ENCODE measurements at regions of chr10 and their contacts with region 1.

Region 1: GRCh38 chr10:79195091-79195923 is 126.5 kb downstream of the ZMIZ1 start:
- DNase-seq: peak; percentile 85
- H3K4me3 ChIP-seq: no peak overlapping the region
- H3K27ac ChIP-seq: no peak overlapping the region
- H3K4me1 ChIP-seq: peaks cover 4% of the 10 kb centered on the region
- H3K27me3 ChIP-seq: no peaks in the 10 kb centered on the region
- CTCF ChIP-seq: peak; percentile 95

Region 2: GRCh38 chr10:78211561-78212051 is 983.7 kb before region 1 on chr10:
- CTCF ChIA-PET with region 1: no interaction called
- POLR2A ChIA-PET with region 1: no interaction called
- intact Hi-C with region 1: loop called (anchors 5 kb)
- DNase-seq: peak; percentile 39
- H3K4me3 ChIP-seq: no peak overlapping the region
- H3K27ac ChIP-seq: no peak overlapping the region
- H3K4me1 ChIP-seq: peaks cover 26% of the 10 kb centered on the region
- H3K27me3 ChIP-seq: no peaks in the 10 kb centered on the region
- CTCF ChIP-seq: peak; percentile 73

Region 3: DNA sequence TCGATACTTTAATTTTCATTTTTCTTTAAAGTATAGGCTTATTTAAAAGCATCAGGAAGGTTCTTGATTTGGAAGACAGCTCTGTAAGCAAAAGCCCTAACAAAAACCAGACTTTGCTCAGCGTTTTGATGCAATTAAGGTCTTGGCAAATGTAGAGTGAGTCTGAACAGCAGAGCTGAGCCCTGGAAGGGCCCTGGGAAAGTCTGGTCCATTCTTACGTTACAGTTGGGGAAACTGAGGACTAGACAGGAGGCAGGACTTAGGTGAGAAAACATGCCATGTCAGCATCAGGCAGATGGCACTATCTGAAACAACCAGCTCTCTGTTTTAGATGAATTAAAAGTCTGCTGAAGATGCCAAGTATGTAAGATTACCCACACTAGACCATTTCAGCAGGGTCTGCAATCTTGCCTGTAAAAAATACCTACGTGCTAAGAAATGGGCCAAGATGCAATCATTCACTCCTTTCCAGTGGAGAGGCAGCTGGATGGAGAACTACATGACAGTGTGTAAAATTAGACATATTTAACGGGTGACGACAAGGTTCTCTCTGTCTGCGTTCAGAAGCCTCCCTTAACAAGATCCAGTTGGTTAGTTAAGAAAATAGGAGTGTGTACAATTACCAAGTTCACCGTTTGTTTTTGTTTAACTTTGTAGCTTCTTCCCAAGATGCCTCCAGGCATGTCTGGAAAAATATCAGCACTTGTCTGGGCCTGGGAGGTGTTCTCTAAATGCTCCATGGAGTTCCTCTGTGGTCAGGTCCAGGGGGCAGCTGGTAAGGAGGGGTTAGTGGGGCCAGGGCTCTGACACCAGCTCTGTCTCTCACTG is 628.8 kb before region 1 on chr10:
- CTCF ChIA-PET with region 1: no interaction called
- POLR2A ChIA-PET with region 1: no interaction called
- intact Hi-C with region 1: no loop called
- DNase-seq: no peak
- H3K4me3 ChIP-seq: no peak overlapping the region
- H3K27ac ChIP-seq: no peak overlapping the region
- H3K4me1 ChIP-seq: no peaks in the 10 kb centered on the region
- H3K27me3 ChIP-seq: no peaks in the 10 kb centered on the region
- CTCF ChIP-seq: no peak

Region 4: DNA sequence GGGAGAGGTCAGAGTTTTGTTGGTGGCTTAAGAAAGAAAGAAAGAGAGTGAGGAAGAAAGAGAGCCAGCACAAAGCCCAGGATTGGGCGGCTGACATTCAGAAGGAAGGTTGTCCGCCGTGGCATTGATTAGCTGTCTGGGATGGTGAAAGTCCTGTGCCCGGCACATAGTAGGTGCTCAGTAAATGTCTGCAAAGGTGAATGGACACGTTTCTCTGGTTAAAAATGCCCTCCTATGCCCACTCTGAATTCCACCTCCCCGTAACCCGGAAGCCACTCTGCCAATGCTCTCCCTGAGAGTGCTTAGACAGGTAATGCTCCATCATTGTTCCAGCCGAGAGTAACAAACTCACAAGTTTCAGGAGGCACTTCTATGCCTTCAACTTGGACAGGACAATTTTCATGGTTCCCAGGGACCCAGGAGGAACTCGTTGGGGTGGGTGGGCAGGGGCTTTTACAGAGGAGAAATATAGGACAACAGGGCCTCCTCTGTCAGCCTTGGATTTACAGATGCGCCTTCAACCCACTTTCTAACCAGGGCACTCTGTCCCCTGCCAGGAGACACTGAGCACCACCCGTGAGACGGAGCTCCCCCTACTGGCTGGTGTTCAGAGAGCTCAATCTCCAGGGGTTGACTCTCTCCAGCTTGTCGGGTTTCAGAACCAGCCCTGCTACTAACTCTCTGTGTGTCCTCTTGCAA is 538.0 kb before region 1 on chr10:
- CTCF ChIA-PET with region 1: interaction called, 3 read pairs
- POLR2A ChIA-PET with region 1: no interaction called
- intact Hi-C with region 1: loop called (anchors 5 kb)
- DNase-seq: peak; percentile 72
- H3K4me3 ChIP-seq: no peak overlapping the region
- H3K27ac ChIP-seq: no peak overlapping the region
- H3K4me1 ChIP-seq: no peaks in the 10 kb centered on the region
- H3K27me3 ChIP-seq: peaks cover 11% of the 10 kb centered on the region
- CTCF ChIP-seq: peak; percentile 73

Region 5: GRCh38 chr10:78846760-78847159 is 348.5 kb before region 1 on chr10:
- CTCF ChIA-PET with region 1: no interaction called
- POLR2A ChIA-PET with region 1: no interaction called
- intact Hi-C with region 1: loop called (anchors 10 kb)
- DNase-seq: no peak
- H3K4me3 ChIP-seq: no peak overlapping the region
- H3K27ac ChIP-seq: no peak overlapping the region
- H3K4me1 ChIP-seq: no peaks in the 10 kb centered on the region
- H3K27me3 ChIP-seq: no peaks in the 10 kb centered on the region
- CTCF ChIP-seq: no peak

Region 6: GRCh38 chr10:78972947-78973900 is 222.1 kb before region 1 on chr10:
- CTCF ChIA-PET with region 1: interaction called, 5 read pairs
- POLR2A ChIA-PET with region 1: no interaction called
- intact Hi-C with region 1: loop called (anchors 10 kb)
- DNase-seq: peak; percentile 95
- H3K4me3 ChIP-seq: peak overlapping the region; percentile 51
- H3K27ac ChIP-seq: peak overlapping the region; percentile 80
- H3K4me1 ChIP-seq: peaks cover 20% of the 10 kb centered on the region
- H3K27me3 ChIP-seq: no peaks in the 10 kb centered on the region
- CTCF ChIP-seq: no peak

Region 7: GRCh38 chr10:79068562-79069324 is 126.6 kb before region 1 on chr10 and contains the start of gene ZMIZ1:
- CTCF ChIA-PET with region 1: interaction called, 4 read pairs
- POLR2A ChIA-PET with region 1: no interaction called
- intact Hi-C with region 1: loop called (anchors 1 kb)
- DNase-seq: peak; percentile 93
- H3K4me3 ChIP-seq: peak within 1 kb of the TSS; percentile 86
- H3K27ac ChIP-seq: peak within 1 kb of the TSS; percentile 61
- H3K4me1 ChIP-seq: peaks cover 22% of the 10 kb centered on the region
- H3K27me3 ChIP-seq: no peaks in the 10 kb centered on the region
- CTCF ChIP-seq: no peak
- total RNA-seq, gene ZMIZ1: 35.8 and 42.1 TPM in 2 replicates

Region 8: DNA sequence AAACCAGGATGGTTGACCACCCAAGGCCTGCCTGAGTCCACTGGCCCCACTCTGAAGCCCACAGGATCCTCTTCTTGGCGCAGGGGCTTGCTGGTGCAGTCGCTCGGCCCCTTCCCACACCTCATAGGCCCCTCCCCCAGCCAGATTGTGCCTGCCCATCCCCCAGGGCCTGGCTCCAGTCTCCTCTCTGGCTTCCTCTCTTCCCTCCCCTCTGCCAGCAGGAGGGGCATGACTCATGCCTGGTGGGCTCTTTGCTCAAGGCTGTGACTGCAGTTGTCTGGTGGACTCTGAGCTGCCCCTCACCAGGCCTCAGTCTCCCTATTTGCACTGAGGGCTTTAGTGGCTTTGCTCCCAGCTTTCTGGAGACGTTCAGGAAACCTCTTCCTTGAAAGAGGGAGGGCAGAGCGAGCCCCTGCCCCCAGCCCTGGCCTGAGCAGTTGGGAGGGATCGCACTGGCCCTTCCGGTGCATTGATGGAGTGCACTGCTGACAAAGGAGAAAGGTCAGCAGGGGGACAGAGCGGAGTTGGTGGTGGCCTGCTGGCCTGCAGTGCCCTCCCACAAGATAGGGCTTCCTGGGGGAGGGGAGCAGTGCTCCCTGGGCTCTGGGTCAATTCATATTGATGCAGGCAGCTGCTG is 65.8 kb before region 1 on chr10:
- CTCF ChIA-PET with region 1: no interaction called
- POLR2A ChIA-PET with region 1: no interaction called
- intact Hi-C with region 1: loop called (anchors 2 kb)
- DNase-seq: peak; percentile 85
- H3K4me3 ChIP-seq: no peak overlapping the region
- H3K27ac ChIP-seq: peak overlapping the region; percentile 64
- H3K4me1 ChIP-seq: peaks cover 38% of the 10 kb centered on the region
- H3K27me3 ChIP-seq: no peaks in the 10 kb centered on the region
- CTCF ChIP-seq: no peak

Region 9: DNA sequence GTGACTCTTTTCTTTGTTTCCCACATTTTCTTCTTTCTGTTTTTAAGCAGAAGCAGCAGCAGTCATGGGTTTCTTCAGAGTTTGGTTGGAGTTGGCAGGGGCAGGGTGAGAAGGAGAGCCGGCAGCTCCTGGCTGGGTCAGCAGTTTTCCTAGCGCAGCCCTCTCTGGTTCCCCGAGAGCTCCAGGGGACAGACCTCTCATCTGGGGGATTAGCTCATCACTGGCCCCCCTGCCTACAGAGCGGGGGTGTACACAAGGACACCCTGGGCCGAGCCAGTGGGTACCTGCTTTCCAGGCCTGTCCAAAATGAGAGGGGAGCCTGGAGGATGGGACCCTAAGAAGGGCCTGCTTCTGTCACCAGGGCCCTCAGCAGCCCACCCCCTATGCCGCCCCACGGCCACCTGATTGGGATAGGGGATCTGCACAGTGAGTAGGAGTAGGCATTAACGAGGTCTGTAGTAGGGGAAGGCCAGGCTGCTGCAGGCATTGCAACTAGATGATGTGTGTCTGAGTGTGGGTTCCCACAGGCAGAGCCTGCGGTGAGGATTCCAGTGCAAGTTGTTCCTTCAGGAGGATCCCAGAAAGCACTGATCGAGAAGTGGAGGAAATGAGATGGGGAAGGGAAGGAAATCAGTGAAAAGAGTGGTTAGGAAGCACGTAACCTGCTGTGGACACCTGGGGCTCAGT is 29.1 kb after region 1 on chr10:
- CTCF ChIA-PET with region 1: no interaction called
- POLR2A ChIA-PET with region 1: no interaction called
- intact Hi-C with region 1: no loop called
- DNase-seq: no peak
- H3K4me3 ChIP-seq: no peak overlapping the region
- H3K27ac ChIP-seq: no peak overlapping the region
- H3K4me1 ChIP-seq: peaks cover 3% of the 10 kb centered on the region
- H3K27me3 ChIP-seq: no peaks in the 10 kb centered on the region
- CTCF ChIP-seq: no peak